GM12878 (cell line): ENCODE measurements at regions of chr13 and their contacts with region 1.

Region 1: DNA sequence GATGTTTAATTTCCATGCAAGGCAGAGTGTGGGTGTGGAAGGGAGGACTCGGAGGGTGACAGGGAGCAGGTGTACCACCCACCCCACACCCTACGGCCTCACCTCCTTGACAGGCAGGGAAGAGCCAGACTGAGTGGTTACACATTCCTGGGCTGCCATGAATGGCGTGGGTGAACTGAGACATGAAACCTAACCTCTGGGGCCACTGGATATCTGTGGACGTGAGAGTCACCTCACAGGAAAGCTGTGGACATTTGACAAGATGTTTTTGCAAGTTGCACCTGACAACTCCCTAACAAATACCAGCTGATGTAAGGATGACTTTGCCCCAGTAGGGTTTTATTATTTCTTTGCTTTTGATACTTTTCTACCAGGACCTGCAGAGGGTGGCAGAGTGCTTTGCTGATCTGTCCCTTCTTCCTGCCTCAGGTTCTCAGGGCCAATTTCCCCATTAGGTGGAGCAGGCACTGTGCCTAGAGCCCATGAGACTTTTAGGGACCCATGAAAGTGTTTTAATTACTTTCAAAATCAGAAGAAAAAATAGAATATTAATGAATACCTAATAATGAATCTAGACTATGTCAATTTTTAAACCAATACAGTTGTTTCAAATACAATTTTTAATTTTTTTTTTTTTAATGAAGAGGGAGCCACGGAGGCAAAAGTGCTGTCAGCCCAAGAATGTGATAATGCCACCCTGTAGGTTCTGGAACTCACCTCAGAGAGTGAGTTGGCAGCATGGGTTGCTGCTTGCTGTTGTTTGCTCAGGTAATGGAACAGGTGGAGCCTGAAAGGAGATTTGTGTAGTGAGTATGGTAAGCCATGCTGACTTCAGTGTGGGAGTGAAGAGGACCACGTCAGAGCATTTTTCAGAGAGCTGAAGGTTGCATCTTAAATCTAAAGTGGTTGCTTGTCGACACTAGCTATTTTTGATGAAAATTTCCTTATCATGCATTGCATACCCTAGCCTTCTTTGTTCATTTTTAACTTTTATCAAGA is 58.0 kb upstream of the CYSLTR2 start:
- DNase-seq: no peak
- ATAC-seq: peak; percentile 88
- H3K4me3 ChIP-seq: no peak overlapping the region
- H3K27ac ChIP-seq: no peak overlapping the region
- H3K4me1 ChIP-seq: peaks cover 16% of the 10 kb centered on the region
- H3K27me3 ChIP-seq: no peaks in the 10 kb centered on the region; a peak in 1 of 4 replicates
- CTCF ChIP-seq: peak; percentile 57 to 81 (median 69); a peak in 5 of 6 replicates
- EP300 ChIP-seq: no peak
- POLR2A ChIP-seq: no peak
- RAD21 ChIP-seq: peak; percentile 79

Region 2: GRCh38 chr13:48731957-48732569 is 136.3 kb after region 1 on chr13:
- CTCF ChIA-PET with region 1: interaction called, 9 read pairs
- POLR2A ChIA-PET with region 1: no interaction called
- RAD21 ChIA-PET with region 1: interaction called, 4 read pairs
- SMC1A ChIA-PET with region 1: interaction called, 4 read pairs
- in situ Hi-C with region 1: no loop called
- intact Hi-C with region 1: loop called (anchors 1 kb)
- DNase-seq: no peak
- ATAC-seq: peak; percentile 91
- H3K4me3 ChIP-seq: no peak overlapping the region
- H3K27ac ChIP-seq: no peak overlapping the region
- H3K4me1 ChIP-seq: no peaks in the 10 kb centered on the region
- H3K27me3 ChIP-seq: no peaks in the 10 kb centered on the region; a peak in 1 of 4 replicates
- CTCF ChIP-seq: peak; percentile 59 to 87 (median 81)
- EP300 ChIP-seq: no peak
- POLR2A ChIP-seq: no peak
- RAD21 ChIP-seq: peak; percentile 36; the same call in 1 of the 2 replicates

Region 3: DNA sequence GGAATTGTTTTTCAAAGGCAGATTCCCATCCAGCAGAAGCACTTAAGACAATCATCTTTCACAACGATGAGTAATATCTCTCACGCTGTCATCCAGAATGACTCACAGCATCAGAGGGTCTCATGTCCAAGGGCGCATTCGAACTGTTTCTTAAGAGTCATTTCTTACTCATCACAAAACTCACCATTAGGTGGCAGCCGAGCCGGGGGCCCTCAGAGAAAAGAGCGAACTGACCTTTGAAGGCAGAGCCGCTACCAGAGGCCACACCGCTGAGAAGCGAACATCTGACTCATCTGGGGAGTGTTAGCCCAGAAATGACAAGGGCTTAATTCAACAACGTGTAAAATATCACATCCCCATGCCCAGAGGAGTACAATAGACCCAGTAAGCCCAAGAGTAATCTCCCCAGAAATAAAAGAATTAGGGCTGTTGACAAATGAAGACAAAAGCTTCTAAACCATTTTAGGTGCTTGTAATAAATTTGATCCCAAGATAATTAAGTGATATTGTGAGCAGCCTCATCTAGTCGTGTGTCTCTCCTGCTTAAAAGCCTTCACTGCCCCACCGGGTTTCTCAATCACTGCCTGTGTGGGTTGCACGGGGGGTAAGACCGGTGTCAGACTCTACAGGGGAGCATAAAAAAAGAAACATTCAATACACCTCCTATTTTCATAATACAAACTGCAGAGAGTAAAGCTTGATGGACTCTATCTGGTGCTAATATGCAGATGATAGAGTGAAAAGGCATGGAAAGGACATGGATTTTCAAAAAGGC is 154.2 kb after region 1 on chr13:
- CTCF ChIA-PET with region 1: interaction called, 16 read pairs
- POLR2A ChIA-PET with region 1: no interaction called
- RAD21 ChIA-PET with region 1: no interaction called
- SMC1A ChIA-PET with region 1: interaction called, 10 read pairs
- in situ Hi-C with region 1: no loop called
- intact Hi-C with region 1: no loop called
- DNase-seq: peak; percentile 73
- ATAC-seq: peak; percentile 98
- H3K4me3 ChIP-seq: no peak overlapping the region
- H3K27ac ChIP-seq: no peak overlapping the region
- H3K4me1 ChIP-seq: peaks cover 10% of the 10 kb centered on the region
- H3K27me3 ChIP-seq: no peaks in the 10 kb centered on the region; a peak in 1 of 4 replicates
- CTCF ChIP-seq: peak; percentile 64 to 73 (median 64)
- EP300 ChIP-seq: peak; percentile 48 to 72; a peak in 2 of 4 replicates
- POLR2A ChIP-seq: no peak
- RAD21 ChIP-seq: peak; percentile 57

Region 4: GRCh38 chr13:49071341-49071937 is 475.7 kb after region 1 on chr13:
- CTCF ChIA-PET with region 1: no interaction called
- POLR2A ChIA-PET with region 1: no interaction called
- RAD21 ChIA-PET with region 1: no interaction called
- SMC1A ChIA-PET with region 1: no interaction called
- in situ Hi-C with region 1: no loop called
- intact Hi-C with region 1: no loop called
- DNase-seq: no peak
- ATAC-seq: no peak
- H3K4me3 ChIP-seq: no peak overlapping the region
- H3K27ac ChIP-seq: no peak overlapping the region
- H3K4me1 ChIP-seq: peaks cover 3% of the 10 kb centered on the region; the same call in 1 of the 2 replicates
- H3K27me3 ChIP-seq: no peaks in the 10 kb centered on the region
- CTCF ChIP-seq: no peak
- EP300 ChIP-seq: no peak
- POLR2A ChIP-seq: no peak
- RAD21 ChIP-seq: no peak